Stomach (tissue), 19 donors: ENCODE measurements at regions of chr12 and their contacts with region 1.

Region 1: GRCh38 chr12:104207416-104208210 is 8.0 kb upstream of the TXNRD1 start:
- DNase-seq: no peak
- H3K4me3 ChIP-seq: no peak overlapping the region
- H3K27ac ChIP-seq: no peak overlapping the region
- H3K4me1 ChIP-seq: no peaks in the 10 kb centered on the region
- H3K27me3 ChIP-seq: no peaks in the 10 kb centered on the region
- CTCF ChIP-seq: no peak
- EP300 ChIP-seq: no peak
- POLR2A ChIP-seq: no peak

Region 2: DNA sequence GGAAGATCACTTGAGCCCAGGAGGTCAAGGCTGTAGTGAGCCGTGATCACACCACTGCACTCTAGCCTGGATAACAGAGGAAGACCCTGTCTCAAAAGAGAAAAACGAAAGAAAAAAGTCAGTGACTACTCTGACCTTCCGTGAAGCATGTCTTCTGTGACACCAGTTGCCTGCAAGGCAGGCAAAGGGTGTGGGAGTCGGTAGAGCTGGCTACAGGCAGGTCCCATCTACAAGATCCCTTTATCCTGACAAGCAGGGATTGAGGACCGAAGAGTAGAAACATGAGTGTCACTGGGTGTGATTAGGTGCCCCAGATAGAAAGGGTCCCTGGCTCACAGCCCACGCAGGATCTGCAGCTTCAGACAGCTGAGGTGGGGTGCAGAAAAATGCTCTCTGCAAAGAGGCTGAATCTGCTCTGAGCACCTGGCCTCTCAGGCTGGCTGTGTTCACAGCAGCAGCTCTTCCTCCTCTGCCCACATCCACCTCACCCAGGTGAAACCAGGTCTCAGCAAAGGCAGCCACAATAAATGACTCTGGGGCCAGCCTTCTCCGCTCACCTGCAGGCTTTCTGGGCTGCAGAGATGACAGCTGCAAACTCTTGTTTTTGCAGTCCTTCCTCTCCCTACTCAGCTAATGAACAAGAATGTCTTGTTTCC is 306.0 kb before region 1 on chr12:
- intact Hi-C with region 1: no loop called
- DNase-seq: peak in 1 of 2 donors; percentile 36
- H3K4me3 ChIP-seq: no peak overlapping the region
- H3K27ac ChIP-seq: no peak overlapping the region
- H3K4me1 ChIP-seq: no peaks in the 10 kb centered on the region
- H3K27me3 ChIP-seq: no peaks in the 10 kb centered on the region
- CTCF ChIP-seq: no peak
- EP300 ChIP-seq: no peak
- POLR2A ChIP-seq: no peak

Region 3: GRCh38 chr12:104064031-104064822 is 143.4 kb before region 1 on chr12 and contains the start of gene HCFC2:
- intact Hi-C with region 1: no loop called
- DNase-seq: peak; percentile 91 to 97
- H3K4me3 ChIP-seq: peak within 1 kb of the TSS; percentile 87 to 99 (median 96)
- H3K27ac ChIP-seq: peak within 1 kb of the TSS; percentile 89 to 94 (median 90)
- H3K4me1 ChIP-seq: peaks cover 15 to 51% (median 38%) of the 10 kb centered on the region in 4 donors
- H3K27me3 ChIP-seq: peaks cover 0 to 5% (median 0%) of the 10 kb centered on the region in 3 donors
- CTCF ChIP-seq: no peak
- EP300 ChIP-seq: no peak
- POLR2A ChIP-seq: no peak
- total RNA-seq, gene HCFC2: 2.9 to 50.1 (median 21.6) TPM

Region 4: GRCh38 chr12:104272938-104273337 is 65.3 kb after region 1 on chr12:
- intact Hi-C with region 1: no loop called
- DNase-seq: peak; percentile 34 to 50
- H3K4me3 ChIP-seq: no peak overlapping the region
- H3K27ac ChIP-seq: no peak overlapping the region
- H3K4me1 ChIP-seq: peaks cover 0 to 25% (median 0%) of the 10 kb centered on the region in 4 donors
- H3K27me3 ChIP-seq: no peaks in the 10 kb centered on the region
- CTCF ChIP-seq: no peak
- EP300 ChIP-seq: no peak
- POLR2A ChIP-seq: no peak

Region 5: GRCh38 chr12:104358347-104359003 is 150.9 kb after region 1 on chr12:
- intact Hi-C with region 1: loop called (anchors 5 kb)
- DNase-seq: peak; percentile 70 to 79
- H3K4me3 ChIP-seq: no peak overlapping the region
- H3K27ac ChIP-seq: no peak overlapping the region
- H3K4me1 ChIP-seq: peaks cover 0 to 6% (median 0%) of the 10 kb centered on the region in 4 donors
- H3K27me3 ChIP-seq: no peaks in the 10 kb centered on the region
- CTCF ChIP-seq: peak in 5 of 7 experiments; percentile 81 to 91 (median 87)
- EP300 ChIP-seq: no peak
- POLR2A ChIP-seq: no peak